Esophagus muscularis mucosa (tissue), 4 donors: ENCODE measurements at regions of chr2 and their contacts with region 1.

Region 1: GRCh38 chr2:238784671-238785527 is 63.0 kb upstream of the TWIST2 start:
- DNase-seq: no peak
- H3K4me3 ChIP-seq: no peak overlapping the region
- H3K27ac ChIP-seq: peak overlapping the region; percentile 37 to 52 (median 49)
- H3K4me1 ChIP-seq: peaks cover 0 to 16% (median 13%) of the 10 kb centered on the region in 4 donors
- H3K27me3 ChIP-seq: no peaks in the 10 kb centered on the region
- CTCF ChIP-seq: peak; percentile 89 to 94 (median 93)
- EP300 ChIP-seq: no peak
- POLR2A ChIP-seq: no peak

Region 2: GRCh38 chr2:238370823-238371372 is 414.0 kb before region 1 on chr2:
- intact Hi-C with region 1: loop called (anchors 5 kb)
- DNase-seq: no peak
- H3K4me3 ChIP-seq: no peak overlapping the region
- H3K27ac ChIP-seq: no peak overlapping the region
- H3K4me1 ChIP-seq: peaks cover 0 to 9% (median 5%) of the 10 kb centered on the region in 4 donors
- H3K27me3 ChIP-seq: no peaks in the 10 kb centered on the region
- CTCF ChIP-seq: peak; percentile 73 to 86 (median 77)
- EP300 ChIP-seq: no peak
- POLR2A ChIP-seq: no peak

Region 3: GRCh38 chr2:238523158-238524110 is 261.5 kb before region 1 on chr2:
- intact Hi-C with region 1: loop called (anchors 5 kb)
- DNase-seq: no peak
- H3K4me3 ChIP-seq: peak overlapping the region in 1 of 4 donors; percentile 5
- H3K27ac ChIP-seq: peak overlapping the region; percentile 44 to 69 (median 58)
- H3K4me1 ChIP-seq: peaks cover 0 to 16% (median 13%) of the 10 kb centered on the region in 4 donors
- H3K27me3 ChIP-seq: no peaks in the 10 kb centered on the region
- CTCF ChIP-seq: peak; percentile 23 to 41 (median 38)
- EP300 ChIP-seq: no peak
- POLR2A ChIP-seq: no peak

Region 4: DNA sequence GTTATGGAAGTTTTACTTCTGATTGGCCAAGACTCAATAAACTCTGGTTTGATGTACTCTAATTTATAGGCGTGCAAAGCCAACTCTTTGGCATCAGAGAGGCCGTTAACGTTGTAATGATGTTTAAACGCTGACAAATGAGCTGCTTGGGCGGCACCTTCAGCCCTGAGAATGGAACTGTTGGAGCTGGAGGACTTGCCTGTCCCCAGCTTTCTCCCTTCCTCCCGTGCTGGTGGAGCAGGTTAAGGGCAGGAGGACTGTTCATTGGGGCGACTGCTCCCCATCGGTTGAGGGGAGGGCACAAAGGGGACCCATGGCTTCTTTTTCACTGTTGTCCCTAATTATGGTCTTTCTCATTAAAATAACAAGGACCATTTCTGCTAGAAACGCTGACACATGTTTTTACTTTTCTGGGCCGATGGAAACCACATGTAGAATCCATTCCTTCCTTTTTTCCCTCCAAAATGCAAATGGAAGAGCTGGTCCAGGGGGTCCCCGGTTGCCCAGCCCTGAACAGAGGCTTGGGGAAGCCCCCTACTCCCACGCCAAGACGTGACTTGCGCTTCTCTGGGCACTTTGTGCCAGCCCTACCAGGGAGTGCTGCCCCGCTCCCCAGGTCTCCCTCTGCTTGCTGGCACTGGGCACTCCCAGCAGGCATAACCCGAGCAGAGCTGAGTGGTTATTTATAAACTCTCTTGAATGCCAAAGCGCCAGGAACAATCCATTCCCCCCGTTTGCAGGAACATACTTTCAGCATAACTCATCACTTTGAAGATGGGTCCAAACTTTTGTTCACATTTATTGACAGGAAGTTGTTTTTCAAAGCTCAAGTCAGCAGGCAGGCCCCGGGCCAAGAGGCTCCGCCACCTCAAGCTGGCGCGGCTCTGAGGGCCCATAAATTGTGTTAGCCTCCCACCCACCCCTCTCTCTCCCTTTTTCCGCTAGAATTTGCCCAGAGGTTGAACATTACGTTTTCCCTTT is 188.0 kb before region 1 on chr2:
- intact Hi-C with region 1: loop called (anchors 5 kb)
- DNase-seq: peak; percentile 90
- H3K4me3 ChIP-seq: peak overlapping the region in 1 of 4 donors; percentile 17
- H3K27ac ChIP-seq: peak overlapping the region; percentile 87 to 91 (median 89)
- H3K4me1 ChIP-seq: peaks cover 27 to 70% (median 68%) of the 10 kb centered on the region in 4 donors
- H3K27me3 ChIP-seq: no peaks in the 10 kb centered on the region
- CTCF ChIP-seq: no peak
- EP300 ChIP-seq: peak; percentile 94
- POLR2A ChIP-seq: peak; percentile 19

Region 5: DNA sequence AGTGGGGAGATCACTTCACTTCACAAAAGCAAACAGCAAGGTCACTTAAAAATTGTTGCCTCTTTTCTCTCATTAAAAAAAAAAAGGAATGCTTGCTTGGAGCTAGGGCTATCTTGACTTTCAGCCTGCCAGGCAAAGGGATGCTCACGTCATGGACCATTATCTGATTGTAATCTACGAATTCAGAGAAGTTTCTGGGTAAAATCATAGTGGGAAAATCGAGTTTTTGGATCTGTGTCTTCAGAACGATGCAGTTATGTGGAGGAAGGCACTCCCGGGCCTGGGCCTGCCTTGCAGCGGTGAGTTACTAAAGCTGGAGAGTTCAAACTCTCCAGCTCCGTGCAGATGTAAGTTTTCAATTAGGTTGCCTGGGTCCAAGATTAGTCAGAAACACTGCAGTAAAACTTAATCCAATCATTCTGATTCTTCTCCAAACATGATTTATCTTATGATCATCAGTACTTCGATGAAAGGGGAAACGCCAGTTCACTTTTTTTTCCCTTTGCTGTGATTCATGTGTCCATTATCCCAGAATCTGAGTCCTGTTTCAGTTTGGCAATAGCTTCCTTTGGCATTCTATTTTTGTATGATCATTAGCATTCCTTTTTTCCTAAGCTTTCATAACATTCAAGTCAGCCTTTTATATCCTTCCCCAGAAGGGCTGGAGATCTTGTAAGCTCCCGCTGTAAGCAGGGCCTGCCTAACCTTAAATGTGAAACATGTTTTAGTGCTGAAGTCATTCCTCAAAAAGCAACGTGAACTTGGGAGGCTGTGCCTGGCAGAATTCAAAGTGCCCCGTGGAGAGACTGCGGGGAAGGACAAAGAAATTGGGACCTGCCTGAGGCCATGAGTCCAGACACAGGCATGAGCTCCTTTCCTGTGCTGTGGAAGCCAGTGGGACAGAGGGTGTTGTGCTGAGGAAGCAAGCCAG is 56.3 kb before region 1 on chr2:
- intact Hi-C with region 1: loop called (anchors 5 kb)
- DNase-seq: no peak
- H3K4me3 ChIP-seq: peak overlapping the region in 3 of 4 donors; percentile 8 to 44 (median 28)
- H3K27ac ChIP-seq: peak overlapping the region; percentile 91 to 96 (median 95)
- H3K4me1 ChIP-seq: peaks cover 28 to 71% (median 68%) of the 10 kb centered on the region in 4 donors
- H3K27me3 ChIP-seq: no peaks in the 10 kb centered on the region
- CTCF ChIP-seq: no peak
- EP300 ChIP-seq: no peak
- POLR2A ChIP-seq: no peak